ENCODE measurements at regions of chr6 and their contacts with region 1.

Region 1: GRCh38 chr6:146905181-146905704 is 299.0 kb upstream of the STXBP5 start:
- DNase-seq: peak; percentile 96
- ATAC-seq: peak; percentile 88
- H3K4me3 ChIP-seq: no peak overlapping the region
- H3K27ac ChIP-seq: peak overlapping the region; percentile 44
- H3K4me1 ChIP-seq: peaks cover 22% of the 10 kb centered on the region
- H3K27me3 ChIP-seq: no peaks in the 10 kb centered on the region
- CTCF ChIP-seq: no peak

Region 2: DNA sequence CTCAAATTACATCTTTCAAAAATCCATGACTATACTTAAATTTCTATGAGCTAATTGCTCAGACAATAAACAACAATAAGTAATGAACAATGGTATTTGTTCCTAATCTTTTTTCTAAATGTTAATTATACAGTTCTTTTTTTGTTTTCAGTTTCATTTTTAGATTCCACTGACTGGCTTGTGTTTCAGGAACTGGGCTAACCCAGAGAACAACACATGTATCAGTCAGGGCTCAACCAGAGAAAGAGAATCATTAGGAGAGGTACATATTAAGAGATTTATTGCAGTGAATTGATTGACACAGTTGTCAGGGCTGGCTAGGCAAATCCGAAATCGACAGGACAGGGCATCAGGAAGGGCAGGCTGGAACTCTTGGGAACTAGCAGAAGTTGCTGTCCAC is 693.6 kb before region 1 on chr6:
- CTCF ChIA-PET with region 1: no interaction called
- POLR2A ChIA-PET with region 1: no interaction called
- intact Hi-C with region 1: no loop called
- DNase-seq: no peak
- ATAC-seq: no peak
- H3K4me3 ChIP-seq: no peak overlapping the region
- H3K27ac ChIP-seq: no peak overlapping the region
- H3K4me1 ChIP-seq: no peaks in the 10 kb centered on the region
- H3K27me3 ChIP-seq: peaks cover 12% of the 10 kb centered on the region
- CTCF ChIP-seq: no peak

Region 3: DNA sequence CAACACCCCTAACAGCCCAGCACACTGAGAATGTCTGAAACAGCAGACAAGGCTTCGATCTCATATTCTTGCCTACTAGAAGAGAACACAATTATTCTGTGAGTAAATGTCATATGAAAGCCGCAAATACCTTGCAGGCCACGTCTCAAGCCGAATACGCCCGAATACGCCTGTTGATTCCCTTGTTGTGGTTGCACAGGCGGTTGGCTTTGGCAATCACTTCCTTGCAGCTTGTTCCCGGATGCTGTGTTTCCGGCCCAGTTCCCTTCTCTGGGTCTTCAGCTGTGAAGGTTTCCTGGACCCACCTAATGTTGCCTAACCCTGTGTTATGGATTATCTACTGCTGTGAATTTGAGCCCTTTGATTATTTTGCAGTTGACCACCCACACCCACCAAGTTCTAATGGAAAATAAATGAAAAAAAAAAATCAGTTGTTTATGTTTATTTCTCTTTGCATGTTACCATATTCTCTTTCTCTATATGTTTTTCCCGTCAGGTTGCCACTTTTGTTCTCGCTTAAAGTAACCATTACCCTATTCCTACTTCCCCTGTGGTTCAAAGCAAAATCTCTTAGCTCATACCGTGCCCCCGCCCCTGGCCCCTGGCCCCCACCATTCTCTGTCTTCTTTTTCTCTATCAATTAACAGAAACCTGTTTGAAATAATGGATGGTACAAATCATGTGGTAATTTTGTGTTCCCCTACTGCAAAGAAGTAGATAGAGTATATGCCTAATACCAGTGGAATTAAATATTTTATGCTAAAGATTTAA is 134.1 kb before region 1 on chr6:
- CTCF ChIA-PET with region 1: no interaction called
- POLR2A ChIA-PET with region 1: no interaction called
- intact Hi-C with region 1: no loop called
- DNase-seq: no peak
- ATAC-seq: no peak
- H3K4me3 ChIP-seq: no peak overlapping the region
- H3K27ac ChIP-seq: no peak overlapping the region
- H3K4me1 ChIP-seq: no peaks in the 10 kb centered on the region
- H3K27me3 ChIP-seq: no peaks in the 10 kb centered on the region
- CTCF ChIP-seq: no peak

Region 4: GRCh38 chr6:147222160-147222838 is 317.1 kb after region 1 on chr6:
- CTCF ChIA-PET with region 1: interaction called, 3 read pairs
- POLR2A ChIA-PET with region 1: no interaction called
- intact Hi-C with region 1: loop called (anchors 1 kb)
- DNase-seq: peak; percentile 55
- ATAC-seq: peak; percentile 42; the same call in 1 of the 2 replicates
- H3K4me3 ChIP-seq: no peak overlapping the region
- H3K27ac ChIP-seq: no peak overlapping the region
- H3K4me1 ChIP-seq: no peaks in the 10 kb centered on the region
- H3K27me3 ChIP-seq: no peaks in the 10 kb centered on the region
- CTCF ChIP-seq: peak; percentile 65

Region 5: DNA sequence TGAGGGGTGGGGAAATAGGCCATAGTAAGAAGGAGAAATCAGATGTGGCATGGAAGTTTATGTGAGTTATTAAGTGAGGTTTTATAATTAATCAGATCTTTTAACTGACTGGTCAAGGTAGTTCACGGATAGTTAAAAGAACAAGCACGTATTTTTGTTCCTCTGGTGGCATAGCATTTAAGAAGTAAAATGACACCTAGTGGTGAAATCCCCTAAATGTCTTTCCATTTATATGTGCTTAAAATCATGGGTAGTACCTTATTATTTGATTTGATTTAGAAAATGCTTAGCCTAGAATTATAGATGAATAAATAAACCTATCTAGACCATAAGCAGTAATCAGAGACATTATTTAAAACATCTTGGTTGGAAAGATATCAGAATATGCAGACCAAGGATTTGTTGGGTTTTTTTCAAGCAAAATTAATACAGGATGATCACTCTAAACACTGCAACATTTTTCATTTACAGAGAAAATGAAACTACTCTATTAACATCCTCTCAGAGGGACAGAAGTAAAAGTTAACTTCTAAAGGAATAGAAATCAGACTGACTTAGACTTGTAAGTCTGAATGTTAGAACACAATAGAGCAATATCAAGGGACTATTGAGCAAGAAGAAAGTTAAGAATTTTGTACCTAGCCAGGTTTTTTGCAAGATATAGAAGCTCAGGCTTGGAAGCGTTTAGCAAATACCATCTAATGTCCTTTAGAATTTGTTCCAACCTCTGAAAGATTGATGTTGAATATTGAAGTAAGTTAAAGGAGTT is 380.0 kb after region 1 on chr6:
- CTCF ChIA-PET with region 1: no interaction called
- POLR2A ChIA-PET with region 1: no interaction called
- intact Hi-C with region 1: loop called (anchors 1 kb)
- DNase-seq: peak; percentile 68
- ATAC-seq: peak; percentile 41
- H3K4me3 ChIP-seq: no peak overlapping the region
- H3K27ac ChIP-seq: no peak overlapping the region
- H3K4me1 ChIP-seq: peaks cover 37% of the 10 kb centered on the region
- H3K27me3 ChIP-seq: no peaks in the 10 kb centered on the region
- CTCF ChIP-seq: peak; percentile 68

Region 6: DNA sequence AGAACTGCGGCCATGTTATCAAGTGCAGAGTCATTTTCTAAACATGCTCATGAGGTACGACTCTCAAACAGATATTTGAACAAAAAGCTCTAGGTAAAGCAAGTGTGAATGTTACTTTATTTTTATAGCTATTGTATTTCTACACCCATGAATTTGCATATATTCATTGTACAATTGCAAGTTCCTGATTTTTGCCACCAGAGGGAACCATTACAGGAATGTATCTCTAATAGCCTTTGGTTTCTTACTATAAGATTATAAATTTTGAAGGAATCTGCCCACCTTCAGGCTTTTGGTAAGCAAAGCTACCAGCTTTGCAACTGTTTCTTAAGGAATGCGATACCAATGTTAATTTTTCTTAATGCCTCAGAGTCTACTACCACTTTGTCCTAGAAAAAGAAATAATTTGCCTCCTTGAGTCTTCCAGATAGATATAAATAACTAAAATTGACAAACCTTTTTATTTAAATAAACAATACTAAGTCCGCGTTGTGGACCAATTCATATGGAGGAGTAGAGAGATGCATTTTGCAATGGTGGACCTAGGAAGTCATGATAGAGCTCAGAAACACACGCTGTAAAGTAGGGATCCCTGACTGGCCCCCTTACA is 477.8 kb after region 1 on chr6:
- CTCF ChIA-PET with region 1: no interaction called
- POLR2A ChIA-PET with region 1: no interaction called
- intact Hi-C with region 1: loop called (anchors 2 kb)
- DNase-seq: peak; percentile 55
- ATAC-seq: peak; percentile 46
- H3K4me3 ChIP-seq: no peak overlapping the region
- H3K27ac ChIP-seq: no peak overlapping the region
- H3K4me1 ChIP-seq: no peaks in the 10 kb centered on the region
- H3K27me3 ChIP-seq: no peaks in the 10 kb centered on the region
- CTCF ChIP-seq: peak; percentile 63

Measured in PC-3 (cell line).